CD4-positive, alpha-beta T cell (primary cell): ENCODE measurements at regions of chr4 and their contacts with region 1.

Region 1: GRCh38 chr4:34880246-34880645 is 1364.1 kb downstream of the ARAP2 start:
- DNase-seq: no peak
- ATAC-seq: no peak
- H3K4me3 ChIP-seq: no peak overlapping the region
- H3K4me3 Mint-ChIP-seq: no peak overlapping the region
- H3K27ac ChIP-seq: no peak overlapping the region
- H3K27ac Mint-ChIP-seq: no peak overlapping the region
- H3K4me1 ChIP-seq: no peaks in the 10 kb centered on the region
- H3K4me1 Mint-ChIP-seq: no peaks in the 10 kb centered on the region
- H3K27me3 ChIP-seq: no peaks in the 10 kb centered on the region
- H3K27me3 Mint-ChIP-seq: no peaks in the 10 kb centered on the region
- CTCF ChIP-seq: no peak

Region 2: GRCh38 chr4:35228313-35228712 is 348.1 kb after region 1 on chr4:
- CTCF ChIA-PET with region 1: no interaction called
- POLR2A ChIA-PET with region 1: no interaction called
- intact Hi-C with region 1: no loop called
- DNase-seq: no peak
- ATAC-seq: no peak
- H3K4me3 ChIP-seq: no peak overlapping the region
- H3K4me3 Mint-ChIP-seq: no peak overlapping the region
- H3K27ac ChIP-seq: no peak overlapping the region
- H3K27ac Mint-ChIP-seq: no peak overlapping the region
- H3K4me1 ChIP-seq: no peaks in the 10 kb centered on the region
- H3K4me1 Mint-ChIP-seq: no peaks in the 10 kb centered on the region
- H3K27me3 ChIP-seq: no peaks in the 10 kb centered on the region
- H3K27me3 Mint-ChIP-seq: no peaks in the 10 kb centered on the region
- CTCF ChIP-seq: no peak

Region 3: DNA sequence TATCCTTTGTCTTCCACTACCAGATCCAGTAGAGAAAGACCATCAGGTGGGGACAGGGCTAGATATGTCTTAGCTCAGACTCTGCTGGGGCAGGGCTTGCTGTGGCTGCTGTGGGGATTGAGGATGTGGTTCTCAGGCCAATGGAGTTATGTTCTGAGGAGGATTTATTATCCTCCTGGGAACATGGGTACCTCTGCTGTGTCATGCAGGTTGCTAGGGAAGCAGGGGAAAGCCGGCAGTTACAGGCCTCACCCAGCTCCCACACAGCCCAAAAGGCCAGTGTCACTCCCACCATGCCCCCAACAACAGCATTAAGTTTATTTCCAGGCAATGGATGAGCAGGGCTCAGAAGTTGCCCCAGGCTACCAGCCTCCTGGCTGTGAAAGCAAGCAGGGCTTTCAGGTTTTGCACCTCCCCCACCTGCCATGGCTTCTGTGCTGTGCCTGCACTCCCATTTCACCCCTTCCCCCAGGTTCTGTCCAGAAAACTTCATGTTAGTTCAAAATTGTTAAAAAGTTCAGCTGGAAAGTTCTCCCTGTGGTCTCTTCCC is 484.1 kb after region 1 on chr4:
- CTCF ChIA-PET with region 1: no interaction called
- POLR2A ChIA-PET with region 1: no interaction called
- intact Hi-C with region 1: loop called in 1 of 2 experiments (anchors 5 kb)
- DNase-seq: no peak
- ATAC-seq: no peak
- H3K4me3 ChIP-seq: no peak overlapping the region
- H3K4me3 Mint-ChIP-seq: no peak overlapping the region
- H3K27ac ChIP-seq: no peak overlapping the region
- H3K27ac Mint-ChIP-seq: no peak overlapping the region
- H3K4me1 ChIP-seq: no peaks in the 10 kb centered on the region
- H3K4me1 Mint-ChIP-seq: no peaks in the 10 kb centered on the region
- H3K27me3 ChIP-seq: no peaks in the 10 kb centered on the region
- H3K27me3 Mint-ChIP-seq: no peaks in the 10 kb centered on the region
- CTCF ChIP-seq: no peak